WTC11 (cell line): ENCODE measurements at regions of chr10 and their contacts with region 1.

Region 1: DNA sequence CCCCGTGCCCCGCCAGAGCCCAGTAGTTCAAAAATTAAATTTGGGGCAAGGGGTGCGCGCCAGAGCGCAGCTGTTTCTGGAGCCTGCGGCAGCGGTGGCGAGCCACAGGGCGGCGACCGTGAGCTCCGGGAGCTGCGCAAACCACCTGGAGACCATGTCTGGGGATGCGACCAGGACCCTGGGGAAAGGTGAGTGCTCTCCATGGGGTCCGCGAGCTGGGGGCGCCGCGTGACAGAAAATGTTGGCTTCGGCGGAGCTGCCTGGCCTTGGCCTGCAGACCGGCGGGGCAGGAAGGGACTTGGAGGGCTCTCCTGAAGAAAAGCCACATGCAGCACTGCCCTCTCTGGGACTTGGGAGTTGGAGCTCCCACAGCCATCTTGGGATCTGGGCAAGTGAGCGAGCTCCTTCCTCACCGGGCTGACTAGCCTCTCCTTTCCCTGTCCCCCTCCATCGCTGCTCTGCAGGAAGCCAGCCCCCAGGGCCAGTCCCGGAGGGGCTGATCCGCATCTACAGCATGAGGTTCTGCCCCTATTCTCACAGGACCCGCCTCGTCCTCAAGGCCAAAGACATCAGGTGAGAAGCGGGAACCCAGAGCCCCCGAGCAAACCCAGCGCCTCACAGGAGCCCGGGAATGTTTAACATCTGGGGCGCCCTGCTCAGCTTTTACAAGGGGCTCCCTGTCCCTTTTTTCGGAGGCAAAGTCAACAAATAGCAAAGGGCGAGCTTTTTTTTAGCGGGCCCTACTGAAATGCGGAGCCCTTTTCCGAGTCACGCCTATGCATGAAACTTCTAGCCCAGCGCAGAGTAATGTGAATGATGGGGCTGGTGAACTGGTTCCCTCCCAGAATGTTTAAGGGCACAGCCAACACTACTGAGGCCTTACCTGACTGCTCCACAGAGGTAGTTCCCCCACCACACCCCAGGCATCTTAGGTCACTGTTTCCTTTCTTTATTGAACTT is 6.1 kb downstream of the GSTO2 start:
- DNase-seq: peak; percentile 79
- ATAC-seq: peak; percentile 94
- H3K4me3 Mint-ChIP-seq: peak overlapping the region; percentile 70
- H3K27ac Mint-ChIP-seq: no peak overlapping the region
- H3K4me1 Mint-ChIP-seq: peaks cover 10% of the 10 kb centered on the region
- H3K27me3 Mint-ChIP-seq: peaks cover 12% of the 10 kb centered on the region
- CTCF ChIP-seq: peak; percentile 71

Region 2: DNA sequence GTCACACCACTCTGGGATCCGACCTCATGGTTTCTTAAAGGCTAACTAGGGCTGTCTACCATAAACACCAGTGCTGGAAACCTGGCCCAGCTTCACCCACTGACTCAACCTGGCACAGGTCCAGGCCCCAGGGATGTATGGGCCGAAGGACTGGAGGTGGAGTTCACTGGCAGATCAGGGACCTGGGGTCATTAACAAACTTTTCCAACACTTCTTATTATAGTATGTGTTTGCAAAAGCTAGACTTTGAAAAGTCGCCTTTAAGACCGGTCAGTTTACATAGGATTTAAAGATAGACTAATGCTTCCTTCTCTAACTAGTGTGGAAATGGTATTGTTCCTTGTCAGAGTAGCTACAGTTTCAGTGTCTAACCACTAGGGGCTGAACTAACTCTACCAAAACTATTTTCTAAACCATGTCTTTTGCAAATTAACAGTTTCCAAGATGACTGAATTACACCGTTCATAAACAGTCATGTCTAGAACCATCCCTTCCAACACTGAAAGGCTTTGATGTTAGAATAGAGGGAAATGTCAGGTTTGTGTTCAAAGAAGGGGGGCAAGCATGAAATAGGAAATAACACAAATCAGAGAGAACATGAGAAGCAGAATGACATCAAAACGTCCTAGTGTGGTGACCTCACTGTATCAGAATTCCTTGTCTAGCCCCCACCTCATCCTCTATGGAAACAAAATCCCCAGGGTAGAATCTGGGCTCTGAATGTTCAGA is 386.8 kb before region 1 on chr10:
- CTCF ChIA-PET with region 1: interaction called, 18 read pairs
- POLR2A ChIA-PET with region 1: no interaction called
- DNase-seq: no peak
- ATAC-seq: peak; percentile 39
- H3K4me3 Mint-ChIP-seq: no peak overlapping the region
- H3K27ac Mint-ChIP-seq: no peak overlapping the region
- H3K4me1 Mint-ChIP-seq: no peaks in the 10 kb centered on the region
- H3K27me3 Mint-ChIP-seq: no peaks in the 10 kb centered on the region
- CTCF ChIP-seq: peak; percentile 48

Region 3: DNA sequence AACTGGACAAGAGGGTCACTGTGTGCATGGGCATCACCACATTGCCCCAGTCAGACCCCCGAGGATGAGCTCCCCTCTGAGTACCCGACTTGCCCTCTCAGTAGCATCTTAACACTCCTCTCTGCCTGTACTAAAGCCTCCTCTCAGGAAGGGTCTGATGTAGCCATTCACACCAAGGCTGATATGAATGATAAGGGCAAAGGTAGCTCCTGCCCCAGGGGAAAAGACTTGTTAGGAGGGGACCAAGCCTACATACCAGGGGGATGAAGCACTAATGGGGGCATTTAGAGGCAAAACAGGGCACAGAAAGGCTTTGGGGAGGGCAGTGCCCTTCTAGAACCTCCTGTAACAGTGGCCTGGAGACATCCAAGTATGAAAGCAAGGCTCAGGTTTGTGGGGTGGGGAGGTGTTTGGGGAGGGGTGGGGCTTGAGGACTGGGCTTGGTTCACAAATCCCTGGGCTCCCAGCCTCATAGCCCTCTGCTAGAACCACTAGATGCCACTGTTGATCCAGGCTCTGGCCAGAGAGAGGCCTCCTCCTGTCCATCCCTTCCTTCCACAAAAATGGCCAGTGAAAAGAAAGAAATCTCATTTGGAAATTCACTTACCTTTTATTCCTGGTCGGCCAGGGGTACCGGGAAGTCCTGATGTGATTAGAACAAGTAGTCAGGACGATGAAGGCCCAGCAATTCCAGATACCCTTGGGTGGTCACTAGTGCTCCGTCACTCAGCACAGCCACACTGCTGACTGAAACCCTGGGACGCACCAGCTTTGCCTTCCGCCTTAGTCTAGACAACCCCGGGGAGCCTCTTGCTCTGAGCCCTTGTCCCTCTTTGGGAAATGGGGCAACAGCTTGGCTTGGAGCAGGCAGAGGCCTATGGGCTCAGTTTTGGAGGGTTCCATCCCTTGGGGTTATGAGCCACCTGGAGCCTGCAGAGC is 229.6 kb before region 1 on chr10:
- CTCF ChIA-PET with region 1: interaction called, 12 read pairs
- POLR2A ChIA-PET with region 1: no interaction called
- DNase-seq: peak; percentile 78
- ATAC-seq: peak; percentile 99
- H3K4me3 Mint-ChIP-seq: no peak overlapping the region
- H3K27ac Mint-ChIP-seq: no peak overlapping the region
- H3K4me1 Mint-ChIP-seq: peaks cover 6% of the 10 kb centered on the region
- H3K27me3 Mint-ChIP-seq: peaks cover 3% of the 10 kb centered on the region; the same call in 1 of the 2 replicates
- CTCF ChIP-seq: 0 out of 2 replicates have a peak, but pooled peaks have one; percentile 21

Region 4: DNA sequence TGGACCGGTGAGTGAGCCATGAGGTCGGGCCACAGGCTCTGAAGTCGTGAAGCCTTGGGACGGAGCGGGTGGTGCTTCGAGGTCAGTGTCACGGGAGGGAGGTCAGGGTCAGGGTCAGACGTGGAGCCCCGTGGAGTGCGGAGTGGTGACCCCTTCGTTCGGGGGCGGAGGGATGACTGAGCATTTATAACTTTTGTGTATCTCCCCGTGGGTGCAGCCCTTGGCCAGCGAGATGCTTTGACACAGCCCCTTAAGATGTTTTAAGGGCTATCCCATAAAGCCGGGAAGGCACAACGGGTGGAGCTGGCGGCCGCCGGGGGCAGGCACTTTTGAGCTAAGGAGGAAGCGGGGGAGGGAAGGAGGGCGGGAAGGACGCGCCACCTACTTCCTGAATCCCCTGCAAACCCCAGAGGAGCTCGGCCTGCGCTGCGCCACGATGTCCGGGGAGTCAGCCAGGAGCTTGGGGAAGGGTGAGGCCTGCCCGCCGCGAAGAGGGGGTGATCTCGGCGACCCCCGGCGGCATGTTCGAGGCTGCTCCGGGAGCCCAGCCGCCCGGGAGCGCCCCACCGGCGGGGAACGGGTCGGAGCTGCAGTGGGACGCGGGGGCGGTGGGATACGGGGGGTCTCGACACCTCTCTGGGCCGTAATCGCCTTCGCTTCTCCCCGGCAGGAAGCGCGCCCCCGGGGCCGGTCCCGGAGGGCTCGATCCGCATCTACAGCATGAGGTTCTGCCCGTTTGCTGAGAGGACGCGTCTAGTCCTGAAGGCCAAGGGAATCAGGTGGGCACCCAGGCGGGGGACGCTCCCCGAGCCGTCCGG is 20.3 kb before region 1 on chr10 and contains the start of gene GSTO1:
- CTCF ChIA-PET with region 1: interaction called, 56 read pairs
- POLR2A ChIA-PET with region 1: interaction called, 5 read pairs
- DNase-seq: peak; percentile 65
- ATAC-seq: peak; percentile 74
- H3K4me3 Mint-ChIP-seq: peak within 1 kb of the TSS; percentile 81
- H3K27ac Mint-ChIP-seq: peak within 1 kb of the TSS; percentile 87
- H3K4me1 Mint-ChIP-seq: peaks cover 60% of the 10 kb centered on the region
- H3K27me3 Mint-ChIP-seq: peaks cover 13% of the 10 kb centered on the region
- CTCF ChIP-seq: no peak
- total RNA-seq, gene GSTO1: 87.9 to 99.5 TPM (median 99.2 TPM) in 3 replicates

Region 5: DNA sequence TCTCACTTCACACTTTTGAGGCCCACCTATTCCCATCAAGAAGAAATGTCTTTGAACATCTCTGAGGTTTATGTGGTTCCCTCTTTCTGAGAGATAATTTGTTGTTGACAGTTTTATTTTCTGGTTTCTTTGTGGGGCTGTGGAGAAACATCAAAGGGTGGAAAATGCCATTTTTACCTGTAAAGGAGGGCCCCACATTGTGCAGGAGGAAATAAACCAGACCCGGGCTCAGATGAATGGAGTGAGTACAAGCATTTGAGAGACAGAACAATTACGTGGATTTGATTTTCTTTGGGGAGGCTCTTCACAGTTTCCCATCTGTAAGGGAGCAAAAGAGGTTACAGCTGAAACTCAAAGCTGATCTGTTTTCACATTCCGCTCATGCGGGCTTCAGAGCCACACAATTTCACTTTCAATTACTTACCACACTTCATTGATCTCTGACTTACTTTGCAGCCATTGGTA is 33.4 kb after region 1 on chr10:
- CTCF ChIA-PET with region 1: interaction called, 28 read pairs
- POLR2A ChIA-PET with region 1: no interaction called
- DNase-seq: no peak
- ATAC-seq: no peak
- H3K4me3 Mint-ChIP-seq: no peak overlapping the region
- H3K27ac Mint-ChIP-seq: no peak overlapping the region
- H3K4me1 Mint-ChIP-seq: peaks cover 6% of the 10 kb centered on the region
- H3K27me3 Mint-ChIP-seq: no peaks in the 10 kb centered on the region
- CTCF ChIP-seq: no peak

Region 6: DNA sequence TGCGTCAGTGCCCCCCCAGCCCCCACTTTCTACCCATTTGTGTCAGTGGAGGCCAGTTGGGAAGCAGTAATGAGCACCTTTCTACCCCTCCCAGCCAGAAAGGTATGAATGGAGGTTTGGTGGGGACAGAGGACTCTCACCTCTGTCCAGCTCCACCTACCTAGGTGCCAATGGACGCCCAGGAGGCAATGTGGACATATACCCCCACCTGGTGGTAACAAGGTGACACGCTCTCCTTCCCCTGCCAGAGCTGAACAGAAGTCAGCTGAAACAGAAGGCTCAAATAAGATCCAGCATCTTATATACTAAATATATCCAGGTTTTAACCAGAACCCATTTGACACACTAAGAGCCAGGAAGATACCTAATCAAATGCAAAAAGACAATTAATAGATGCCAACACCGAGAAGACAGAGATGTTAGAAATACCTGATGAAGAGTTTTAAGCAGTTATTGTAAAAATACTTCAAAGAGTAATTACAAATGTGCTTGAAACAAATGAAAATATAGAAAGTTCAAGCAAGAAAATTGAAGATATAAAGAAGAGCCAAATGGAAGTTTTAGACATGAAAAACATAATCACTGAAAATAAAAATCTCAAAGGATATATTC is 347.7 kb after region 1 on chr10:
- CTCF ChIA-PET with region 1: interaction called, 33 read pairs
- POLR2A ChIA-PET with region 1: no interaction called
- DNase-seq: peak; percentile 68
- ATAC-seq: peak; percentile 99
- H3K4me3 Mint-ChIP-seq: no peak overlapping the region
- H3K27ac Mint-ChIP-seq: no peak overlapping the region
- H3K4me1 Mint-ChIP-seq: no peaks in the 10 kb centered on the region
- H3K27me3 Mint-ChIP-seq: peaks cover 2% of the 10 kb centered on the region
- CTCF ChIP-seq: peak; percentile 56